Esophagus muscularis mucosa (tissue), 4 donors: ENCODE measurements at regions of chr5 and their contacts with region 1.

Region 1: DNA sequence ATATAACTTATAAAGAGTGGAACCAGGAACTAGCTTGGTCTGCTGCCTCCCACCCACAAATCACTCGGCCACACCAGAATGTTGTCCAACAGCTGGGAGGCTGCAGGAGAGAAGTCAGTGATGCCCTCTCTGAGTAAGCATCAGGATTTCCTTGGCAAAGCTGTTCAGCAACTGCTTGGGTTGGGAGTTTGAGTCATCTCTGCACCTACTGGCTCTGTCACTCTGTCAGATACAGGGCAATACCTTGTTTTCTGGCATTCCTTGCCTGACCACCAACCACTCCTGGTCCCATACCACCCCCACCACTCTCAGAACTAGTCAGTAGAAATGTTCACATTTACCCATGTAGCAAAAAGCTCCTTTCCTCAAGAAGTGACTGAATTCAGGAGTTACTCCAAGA is 36.8 kb upstream of the GCNT4 start:
- DNase-seq: no peak
- H3K4me3 ChIP-seq: no peak overlapping the region
- H3K27ac ChIP-seq: no peak overlapping the region
- H3K4me1 ChIP-seq: no peaks in the 10 kb centered on the region
- H3K27me3 ChIP-seq: no peaks in the 10 kb centered on the region
- CTCF ChIP-seq: no peak
- EP300 ChIP-seq: no peak
- POLR2A ChIP-seq: no peak

Region 2: DNA sequence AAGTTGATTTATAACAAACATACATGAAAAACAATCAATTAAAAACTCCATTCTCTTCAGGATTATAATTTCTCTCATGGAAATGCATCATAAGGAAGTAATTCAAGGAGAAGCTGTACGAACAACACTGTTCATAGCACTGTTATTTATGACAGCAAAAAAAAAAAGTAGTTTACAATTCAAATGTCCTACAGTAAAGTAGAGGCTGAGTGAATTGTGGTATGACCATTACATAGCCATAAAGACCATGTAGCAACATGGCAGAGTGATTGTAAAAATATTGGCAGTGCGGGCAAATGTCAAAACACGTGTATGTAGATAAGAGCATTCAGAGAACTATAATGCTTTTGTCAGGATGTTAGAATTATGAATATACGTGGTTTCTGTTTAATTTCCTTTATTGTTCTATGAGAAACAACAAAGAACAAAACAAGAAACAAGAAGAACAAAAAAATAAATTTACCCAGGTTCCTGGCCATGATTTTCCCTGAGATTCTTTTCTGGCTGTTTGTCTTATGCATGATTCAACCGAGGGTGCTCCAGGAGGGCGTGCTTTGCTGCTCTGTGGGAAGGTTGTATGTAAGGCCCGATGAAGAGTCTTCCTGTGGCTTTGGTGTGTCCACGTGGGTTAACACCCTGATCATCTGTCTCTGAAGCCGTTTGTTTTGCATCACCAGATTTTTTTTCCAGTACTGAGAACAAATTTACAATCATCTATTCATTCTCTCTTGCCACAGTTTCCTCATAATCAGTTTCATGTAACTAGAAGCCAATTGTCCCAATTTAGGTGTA is 65.6 kb before region 1 on chr5:
- intact Hi-C with region 1: loop called (anchors 10 kb)
- DNase-seq: peak; percentile 17
- H3K4me3 ChIP-seq: no peak overlapping the region
- H3K27ac ChIP-seq: no peak overlapping the region
- H3K4me1 ChIP-seq: no peaks in the 10 kb centered on the region
- H3K27me3 ChIP-seq: no peaks in the 10 kb centered on the region
- CTCF ChIP-seq: no peak
- EP300 ChIP-seq: no peak
- POLR2A ChIP-seq: no peak

Region 3: DNA sequence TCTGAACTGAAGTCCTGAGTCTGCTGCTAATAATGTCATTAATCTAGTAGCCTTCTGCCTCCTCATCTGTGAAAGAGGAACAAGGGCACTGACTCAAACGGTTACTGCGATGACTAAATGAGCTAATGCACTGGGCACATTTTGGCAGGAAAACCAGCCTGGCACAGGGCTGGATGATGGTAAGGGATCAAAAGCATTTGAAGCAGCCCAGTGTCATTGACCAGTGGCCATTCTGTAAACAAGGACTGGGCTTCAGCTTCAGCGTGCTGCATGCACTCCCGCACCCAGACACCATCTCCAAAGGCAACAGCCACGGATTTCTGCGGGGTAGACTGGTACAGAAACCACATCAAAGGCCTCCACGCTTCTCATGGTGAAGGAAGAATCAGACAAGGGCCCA is 44.7 kb before region 1 on chr5:
- intact Hi-C with region 1: no loop called
- DNase-seq: no peak
- H3K4me3 ChIP-seq: no peak overlapping the region
- H3K27ac ChIP-seq: peak overlapping the region in 1 of 4 donors; percentile 6
- H3K4me1 ChIP-seq: peaks cover 0 to 29% (median 24%) of the 10 kb centered on the region in 4 donors
- H3K27me3 ChIP-seq: no peaks in the 10 kb centered on the region
- CTCF ChIP-seq: no peak
- EP300 ChIP-seq: no peak
- POLR2A ChIP-seq: no peak

Region 4: DNA sequence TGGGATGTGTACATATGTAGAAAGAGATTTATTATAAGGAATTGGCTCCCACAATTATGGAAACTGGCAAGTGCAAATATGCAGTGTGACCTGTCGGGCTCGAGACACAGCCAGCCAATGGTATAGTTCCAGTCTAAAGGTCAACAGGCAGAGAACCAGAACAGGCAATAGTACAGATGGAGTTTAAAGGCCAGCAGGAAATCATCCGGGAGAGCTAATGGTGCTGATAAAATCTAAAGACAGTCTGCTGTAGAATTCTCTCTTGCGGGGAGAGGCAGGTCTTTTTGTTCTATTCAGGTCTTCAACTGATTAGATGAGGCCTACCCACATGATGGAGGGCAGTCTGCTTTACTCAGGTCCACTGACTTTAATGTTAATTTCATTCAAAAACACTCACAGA is 125.8 kb after region 1 on chr5:
- intact Hi-C with region 1: no loop called
- DNase-seq: no peak
- H3K4me3 ChIP-seq: no peak overlapping the region
- H3K27ac ChIP-seq: no peak overlapping the region
- H3K4me1 ChIP-seq: no peaks in the 10 kb centered on the region
- H3K27me3 ChIP-seq: no peaks in the 10 kb centered on the region
- CTCF ChIP-seq: no peak
- EP300 ChIP-seq: no peak
- POLR2A ChIP-seq: no peak